H1 (cell line): ENCODE measurements at regions of chr17 and their contacts with region 1.

Region 1: GRCh38 chr17:48241131-48241591 is 133.6 kb downstream of the SNX11 start:
- DNase-seq: no peak
- H3K4me3 ChIP-seq: no peak overlapping the region
- H3K27ac ChIP-seq: no peak overlapping the region
- H3K4me1 ChIP-seq: peaks cover 0 to 8% (median 2%) of the 10 kb centered on the region in 4 experiments; a peak in 2 of 7 replicates
- H3K27me3 ChIP-seq: no peaks in the 10 kb centered on the region
- CTCF ChIP-seq: no peak
- EP300 ChIP-seq: no peak
- POLR2A ChIP-seq: no peak
- RAD21 ChIP-seq: no peak

Region 2: GRCh38 chr17:48228721-48229120 is 12.4 kb before region 1 on chr17:
- CTCF ChIA-PET with region 1: interaction called, 11 read pairs
- POLR2A ChIA-PET with region 1: interaction called, 3 read pairs
- DNase-seq: peak; percentile 9 to 60
- H3K4me3 ChIP-seq: no peak overlapping the region
- H3K27ac ChIP-seq: no peak overlapping the region
- H3K4me1 ChIP-seq: peaks cover 0 to 7% (median 3%) of the 10 kb centered on the region in 4 experiments; a peak in 3 of 7 replicates
- H3K27me3 ChIP-seq: peaks cover 0 to 2% (median 0%) of the 10 kb centered on the region in 4 experiments; a peak in 1 of 7 replicates
- CTCF ChIP-seq: peak; percentile 73 to 90 (median 75)
- EP300 ChIP-seq: no peak
- POLR2A ChIP-seq: no peak
- RAD21 ChIP-seq: peak; percentile 30 to 54; a peak in 3 of 4 replicates